CD8-positive, alpha-beta T cell (primary cell): ENCODE measurements at regions of chr19 and their contacts with region 1.

Region 1: GRCh38 chr19:57578487-57579205 is at the start of gene ZNF416:
- DNase-seq: peak; percentile 91 to 99 (median 94)
- ATAC-seq: peak; percentile 95
- H3K4me3 ChIP-seq: peak within 1 kb of the TSS; percentile 74 to 84
- H3K4me3 Mint-ChIP-seq: peak within 1 kb of the TSS; percentile 85
- H3K27ac ChIP-seq: peak within 1 kb of the TSS; percentile 55 to 65
- H3K27ac Mint-ChIP-seq: peak within 1 kb of the TSS; percentile 81
- H3K4me1 ChIP-seq: peaks cover 25% of the 10 kb centered on the region
- H3K4me1 Mint-ChIP-seq: peaks cover 25% of the 10 kb centered on the region
- H3K27me3 ChIP-seq: no peaks in the 10 kb centered on the region
- H3K27me3 Mint-ChIP-seq: no peaks in the 10 kb centered on the region
- CTCF ChIP-seq: no peak
- total RNA-seq, gene ZNF416: 7.7 to 8.2 TPM

Region 2: GRCh38 chr19:57410877-57411671 is 167.6 kb before region 1 on chr19 and contains the start of gene ZNF17:
- CTCF ChIA-PET with region 1: no interaction called
- POLR2A ChIA-PET with region 1: no interaction called
- intact Hi-C with region 1: loop called in 1 of 2 experiments (anchors 5 kb)
- DNase-seq: peak; percentile 83 to 96 (median 91)
- ATAC-seq: peak; percentile 100
- H3K4me3 ChIP-seq: peak within 1 kb of the TSS; percentile 82 to 99
- H3K4me3 Mint-ChIP-seq: peak within 1 kb of the TSS; percentile 96
- H3K27ac ChIP-seq: peak within 1 kb of the TSS; percentile 67 to 83
- H3K27ac Mint-ChIP-seq: peak within 1 kb of the TSS; percentile 94
- H3K4me1 ChIP-seq: peaks cover 13% of the 10 kb centered on the region
- H3K4me1 Mint-ChIP-seq: peaks cover 35% of the 10 kb centered on the region
- H3K27me3 ChIP-seq: no peaks in the 10 kb centered on the region
- H3K27me3 Mint-ChIP-seq: no peaks in the 10 kb centered on the region
- CTCF ChIP-seq: no peak
- total RNA-seq, gene ZNF17: 15.5 to 18.3 TPM

Region 3: GRCh38 chr19:57559404-57560025 is 19.1 kb before region 1 on chr19 and contains the start of gene ZNF550:
- CTCF ChIA-PET with region 1: interaction called, 3 read pairs
- POLR2A ChIA-PET with region 1: no interaction called
- intact Hi-C with region 1: loop called (anchors 1 kb)
- DNase-seq: peak; percentile 74 to 92 (median 88)
- ATAC-seq: peak; percentile 96
- H3K4me3 ChIP-seq: peak within 1 kb of the TSS; percentile 77 to 89
- H3K4me3 Mint-ChIP-seq: peak within 1 kb of the TSS; percentile 98
- H3K27ac ChIP-seq: peak within 1 kb of the TSS; percentile 64 to 70
- H3K27ac Mint-ChIP-seq: peak within 1 kb of the TSS; percentile 96
- H3K4me1 ChIP-seq: peaks cover 20% of the 10 kb centered on the region
- H3K4me1 Mint-ChIP-seq: peaks cover 32% of the 10 kb centered on the region
- H3K27me3 ChIP-seq: no peaks in the 10 kb centered on the region
- H3K27me3 Mint-ChIP-seq: no peaks in the 10 kb centered on the region
- CTCF ChIP-seq: no peak
- total RNA-seq, gene ZNF550: 15.4 to 17.6 TPM

Region 4: GRCh38 chr19:57613941-57614743 is 35.5 kb after region 1 on chr19 and contains the start of gene ZNF134:
- CTCF ChIA-PET with region 1: no interaction called
- POLR2A ChIA-PET with region 1: interaction called, 8 read pairs
- intact Hi-C with region 1: loop called (anchors 1 kb)
- DNase-seq: peak; percentile 77 to 94 (median 91)
- ATAC-seq: peak; percentile 99
- H3K4me3 ChIP-seq: peak within 1 kb of the TSS; percentile 78 to 90
- H3K4me3 Mint-ChIP-seq: peak within 1 kb of the TSS; percentile 90
- H3K27ac ChIP-seq: peak within 1 kb of the TSS; percentile 37 to 63
- H3K27ac Mint-ChIP-seq: peak within 1 kb of the TSS; percentile 90
- H3K4me1 ChIP-seq: peaks cover 13% of the 10 kb centered on the region
- H3K4me1 Mint-ChIP-seq: peaks cover 31% of the 10 kb centered on the region
- H3K27me3 ChIP-seq: no peaks in the 10 kb centered on the region
- H3K27me3 Mint-ChIP-seq: no peaks in the 10 kb centered on the region
- CTCF ChIP-seq: peak; percentile 16
- total RNA-seq, gene ZNF134: 35.2 to 36.5 TPM

Region 5: GRCh38 chr19:57769345-57770131 is 190.9 kb after region 1 on chr19 and contains the start of gene ZNF586:
- CTCF ChIA-PET with region 1: no interaction called
- POLR2A ChIA-PET with region 1: no interaction called
- intact Hi-C with region 1: loop called in 1 of 2 experiments (anchors 1 kb)
- DNase-seq: peak; percentile 64 to 94 (median 86)
- ATAC-seq: peak; percentile 99
- H3K4me3 ChIP-seq: peak within 1 kb of the TSS; percentile 73 to 90
- H3K4me3 Mint-ChIP-seq: peak within 1 kb of the TSS; percentile 94
- H3K27ac ChIP-seq: peak within 1 kb of the TSS; percentile 61 to 86
- H3K27ac Mint-ChIP-seq: peak within 1 kb of the TSS; percentile 97
- H3K4me1 ChIP-seq: peaks cover 17% of the 10 kb centered on the region
- H3K4me1 Mint-ChIP-seq: peaks cover 35% of the 10 kb centered on the region
- H3K27me3 ChIP-seq: no peaks in the 10 kb centered on the region
- H3K27me3 Mint-ChIP-seq: no peaks in the 10 kb centered on the region
- CTCF ChIP-seq: no peak
- total RNA-seq, gene ZNF586: 54.0 to 57.6 TPM

Region 6: DNA sequence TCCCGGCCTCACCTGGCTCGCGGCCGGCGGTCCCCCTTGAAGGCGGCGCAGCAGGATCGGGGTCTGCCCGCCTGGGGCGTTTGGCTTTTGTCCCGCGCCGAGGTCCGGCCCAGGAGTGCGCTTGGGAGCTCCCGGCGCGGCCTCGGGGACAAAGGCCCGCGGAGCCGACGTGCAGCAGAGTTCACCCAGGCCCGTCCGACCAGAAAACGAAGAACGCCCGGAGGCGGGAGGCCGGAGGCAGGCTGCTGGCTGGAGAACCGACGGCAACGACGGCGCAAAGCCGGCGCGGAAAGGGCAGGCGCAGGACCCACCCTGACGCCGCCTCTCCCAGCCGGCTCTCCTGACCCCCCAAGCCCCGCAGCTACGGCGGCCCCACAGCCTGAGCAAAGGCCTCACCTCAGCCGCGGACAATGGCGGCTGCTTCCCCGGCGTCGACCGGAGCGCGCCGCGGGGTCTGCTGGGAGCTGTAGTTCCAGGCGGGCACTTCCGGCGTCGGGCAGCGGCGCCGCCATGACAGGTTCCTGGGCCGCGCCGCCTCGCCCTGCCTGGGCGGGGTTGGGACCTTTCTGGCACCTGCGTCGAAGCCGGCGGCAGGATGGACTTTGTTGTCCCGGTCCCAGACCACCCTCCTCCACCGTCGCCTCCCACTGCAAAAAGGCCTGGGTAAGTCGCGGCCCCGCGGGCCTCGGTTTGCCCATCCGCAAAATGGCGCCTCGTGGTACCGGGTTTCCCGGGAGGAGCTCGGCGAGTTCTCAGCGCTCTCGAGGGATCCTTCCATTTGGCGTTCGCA is 423.9 kb after region 1 on chr19 and contains the start of gene ZNF606:
- CTCF ChIA-PET with region 1: no interaction called
- POLR2A ChIA-PET with region 1: no interaction called
- intact Hi-C with region 1: loop called (anchors 1 to 10 kb)
- DNase-seq: peak; percentile 72 to 93 (median 84)
- ATAC-seq: peak; percentile 94
- H3K4me3 ChIP-seq: peak within 1 kb of the TSS; percentile 90 to 93
- H3K4me3 Mint-ChIP-seq: peak within 1 kb of the TSS; percentile 87
- H3K27ac ChIP-seq: peak within 1 kb of the TSS; percentile 82 to 93
- H3K27ac Mint-ChIP-seq: peak within 1 kb of the TSS; percentile 94
- H3K4me1 ChIP-seq: peaks cover 20% of the 10 kb centered on the region
- H3K4me1 Mint-ChIP-seq: peaks cover 34% of the 10 kb centered on the region
- H3K27me3 ChIP-seq: no peaks in the 10 kb centered on the region
- H3K27me3 Mint-ChIP-seq: no peaks in the 10 kb centered on the region
- CTCF ChIP-seq: no peak
- total RNA-seq, gene ZNF606: 11.2 to 13.0 TPM